Activated CD4-positive, alpha-beta memory T cell treated with anti-CD3 and anti-CD28 coated beads, Interleukin-2, amount 10 ng/mL, durations not matched to agents 7 days and 5 days (primary cell): ENCODE measurements at regions of chr22 and their contacts with region 1.

Region 1: GRCh38 chr22:36252754-36253517 is at the start of gene APOL1:
- DNase-seq: peak; percentile 63
- H3K4me3 Mint-ChIP-seq: peak within 1 kb of the TSS; percentile 93
- H3K27ac Mint-ChIP-seq: peak within 1 kb of the TSS; percentile 89
- H3K4me1 Mint-ChIP-seq: peaks cover 59% of the 10 kb centered on the region
- H3K27me3 Mint-ChIP-seq: no peaks in the 10 kb centered on the region
- total RNA-seq, gene APOL1: 63.0 to 64.0 TPM

Region 2: GRCh38 chr22:36086170-36086490 is 166.8 kb before region 1 on chr22:
- CTCF ChIA-PET with region 1: no interaction called
- POLR2A ChIA-PET with region 1: no interaction called
- DNase-seq: no peak
- H3K4me3 Mint-ChIP-seq: no peak overlapping the region
- H3K27ac Mint-ChIP-seq: no peak overlapping the region
- H3K4me1 Mint-ChIP-seq: peaks cover 3% of the 10 kb centered on the region
- H3K27me3 Mint-ChIP-seq: no peaks in the 10 kb centered on the region

Region 3: GRCh38 chr22:36184433-36185025 is 68.4 kb before region 1 on chr22:
- CTCF ChIA-PET with region 1: no interaction called
- POLR2A ChIA-PET with region 1: no interaction called
- DNase-seq: no peak
- H3K4me3 Mint-ChIP-seq: no peak overlapping the region
- H3K27ac Mint-ChIP-seq: no peak overlapping the region
- H3K4me1 Mint-ChIP-seq: peaks cover 2% of the 10 kb centered on the region
- H3K27me3 Mint-ChIP-seq: peaks cover 9% of the 10 kb centered on the region

Region 4: DNA sequence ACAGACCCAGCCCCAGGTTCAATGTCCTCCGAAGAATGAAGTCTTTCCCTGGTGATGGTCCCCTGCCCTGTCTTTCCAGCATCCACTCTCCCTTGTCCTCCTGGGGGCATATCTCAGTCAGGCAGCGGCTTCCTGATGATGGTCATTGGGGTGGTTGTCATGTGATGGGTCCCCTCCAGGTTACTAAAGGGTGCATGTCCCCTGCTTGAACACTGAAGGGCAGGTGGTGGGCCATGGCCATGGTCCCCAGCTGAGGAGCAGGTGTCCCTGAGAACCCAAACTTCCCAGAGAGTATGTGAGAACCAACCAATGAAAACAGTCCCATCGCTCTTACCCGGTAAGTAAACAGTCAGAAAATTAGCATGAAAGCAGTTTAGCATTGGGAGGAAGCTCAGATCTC is 14.1 kb after region 1 on chr22:
- CTCF ChIA-PET with region 1: interaction called, 3 read pairs
- POLR2A ChIA-PET with region 1: interaction called, 10 read pairs
- DNase-seq: no peak
- H3K4me3 Mint-ChIP-seq: no peak overlapping the region
- H3K27ac Mint-ChIP-seq: no peak overlapping the region
- H3K4me1 Mint-ChIP-seq: peaks cover 5% of the 10 kb centered on the region
- H3K27me3 Mint-ChIP-seq: no peaks in the 10 kb centered on the region

Region 5: GRCh38 chr22:36277482-36278291 is 24.8 kb after region 1 on chr22:
- CTCF ChIA-PET with region 1: interaction called, 8 read pairs
- POLR2A ChIA-PET with region 1: interaction called, 23 read pairs
- DNase-seq: peak; percentile 74
- H3K4me3 Mint-ChIP-seq: no peak overlapping the region
- H3K27ac Mint-ChIP-seq: peak overlapping the region; percentile 57
- H3K4me1 Mint-ChIP-seq: peaks cover 30% of the 10 kb centered on the region
- H3K27me3 Mint-ChIP-seq: no peaks in the 10 kb centered on the region